ENCODE measurements at regions of chr9 and their contacts with region 1.

Region 1: DNA sequence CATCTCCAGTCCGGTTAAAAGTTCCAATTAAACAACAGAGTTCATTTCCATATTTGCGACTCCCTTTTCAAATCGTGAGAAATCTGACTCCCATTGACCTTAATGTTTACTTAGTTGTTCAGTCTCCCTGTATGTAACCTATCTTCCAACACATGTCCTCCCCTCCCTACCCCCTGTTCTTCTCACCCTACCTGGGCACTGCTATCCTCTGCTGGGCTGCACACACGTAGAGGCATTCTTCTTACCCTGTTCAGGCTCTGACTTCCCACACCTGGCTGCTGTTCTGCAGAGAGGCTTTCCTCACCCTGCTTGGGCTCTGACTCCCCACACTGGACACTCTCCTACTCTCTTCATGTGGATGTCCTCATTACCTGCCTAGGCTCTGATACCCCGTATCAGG is 51.9 kb upstream of the TAL2 start:
- DNase-seq: no peak
- H3K4me3 ChIP-seq: no peak overlapping the region
- H3K27ac ChIP-seq: no peak overlapping the region
- H3K4me1 ChIP-seq: no peaks in the 10 kb centered on the region
- H3K27me3 ChIP-seq: no peaks in the 10 kb centered on the region
- CTCF ChIP-seq: no peak
- EP300 ChIP-seq: no peak
- POLR2A ChIP-seq: no peak

Region 2: DNA sequence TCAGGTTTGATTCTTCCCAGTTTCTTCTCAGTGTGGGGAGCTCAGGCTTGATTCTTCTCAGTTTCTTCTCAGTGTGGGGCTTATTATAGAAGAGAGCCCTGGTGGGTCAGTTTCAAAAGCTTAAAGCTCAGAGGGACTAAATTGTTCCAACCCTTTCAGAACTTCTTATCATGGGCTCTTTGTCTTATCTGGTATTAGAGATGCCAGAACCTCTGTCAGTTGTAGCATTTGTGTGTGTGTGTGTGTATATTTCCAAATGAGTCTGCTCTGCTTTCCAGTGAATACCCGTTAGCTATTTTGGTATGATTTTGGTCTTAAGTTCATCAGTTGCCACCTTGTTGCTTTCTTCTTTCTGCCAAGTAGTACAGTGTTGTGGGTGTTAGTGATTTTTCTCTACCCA is 105.8 kb after region 1 on chr9:
- intact Hi-C with region 1: loop called (anchors 5 kb)
- DNase-seq: no peak
- H3K4me3 ChIP-seq: no peak overlapping the region
- H3K27ac ChIP-seq: no peak overlapping the region
- H3K4me1 ChIP-seq: no peaks in the 10 kb centered on the region
- H3K27me3 ChIP-seq: no peaks in the 10 kb centered on the region
- CTCF ChIP-seq: no peak
- EP300 ChIP-seq: no peak
- POLR2A ChIP-seq: no peak

Measured in stomach (tissue), 19 donors.